HCT116 (cell line): ENCODE measurements at regions of chr12 and their contacts with region 1.

Region 1: GRCh38 chr12:91355150-91356006 is 172.8 kb upstream of the DCN start:
- DNase-seq: peak; percentile 69
- ATAC-seq: peak; percentile 99
- H3K4me3 ChIP-seq: no peak overlapping the region
- H3K27ac ChIP-seq: no peak overlapping the region
- H3K4me1 ChIP-seq: no peaks in the 10 kb centered on the region
- H3K27me3 ChIP-seq: no peaks in the 10 kb centered on the region
- CTCF ChIP-seq: peak; percentile 83 to 91 (median 84)
- POLR2A ChIP-seq: no peak
- RAD21 ChIP-seq: peak; percentile 88

Region 2: DNA sequence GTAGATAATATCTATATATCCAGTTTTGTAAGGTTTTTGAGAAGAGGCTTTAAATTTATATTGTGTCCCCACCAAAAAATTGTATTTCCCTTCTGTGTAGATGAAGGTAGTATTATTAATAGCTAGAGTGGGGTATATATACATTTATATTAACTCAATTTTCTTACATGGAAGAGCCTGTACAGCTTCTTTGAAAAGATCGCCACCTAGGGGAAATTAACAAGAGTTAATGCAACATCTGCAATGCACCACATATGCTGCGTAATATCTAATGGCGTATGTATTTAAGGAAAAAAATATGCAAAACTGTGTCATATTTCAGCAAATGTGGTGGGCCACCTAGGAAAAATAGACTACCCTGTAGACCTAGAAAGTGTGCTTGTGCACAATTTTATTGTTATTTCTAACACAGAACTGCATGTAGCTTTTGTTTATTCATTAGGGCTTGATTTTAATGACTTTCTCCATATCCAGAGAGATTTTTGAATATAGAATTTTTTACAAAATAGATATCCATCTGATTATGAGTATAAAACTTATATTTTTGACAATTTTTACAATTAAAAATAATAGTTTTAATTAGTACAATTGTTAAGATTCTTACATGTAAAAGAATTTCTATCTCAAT is 414.4 kb before region 1 on chr12:
- CTCF ChIA-PET with region 1: interaction called, 23 read pairs
- POLR2A ChIA-PET with region 1: no interaction called
- RAD21 ChIA-PET with region 1: interaction called, 3 to 6 read pairs
- intact Hi-C with region 1: no loop called
- DNase-seq: peak; percentile 55
- ATAC-seq: peak; percentile 94
- H3K4me3 ChIP-seq: no peak overlapping the region
- H3K27ac ChIP-seq: no peak overlapping the region
- H3K4me1 ChIP-seq: peaks cover 0 to 12% of the 10 kb centered on the region in 2 experiments; a peak in 3 of 4 replicates
- H3K27me3 ChIP-seq: no peaks in the 10 kb centered on the region
- CTCF ChIP-seq: peak; percentile 42 to 72 (median 63); a peak in 5 of 6 replicates
- POLR2A ChIP-seq: no peak
- RAD21 ChIP-seq: peak; percentile 78

Region 3: GRCh38 chr12:90959538-90960139 is 395.7 kb before region 1 on chr12:
- CTCF ChIA-PET with region 1: interaction called, 11 read pairs
- POLR2A ChIA-PET with region 1: no interaction called
- RAD21 ChIA-PET with region 1: no interaction called
- intact Hi-C with region 1: loop called (anchors 1 kb)
- DNase-seq: peak; percentile 39
- ATAC-seq: peak; percentile 82
- H3K4me3 ChIP-seq: no peak overlapping the region
- H3K27ac ChIP-seq: no peak overlapping the region
- H3K4me1 ChIP-seq: no peaks in the 10 kb centered on the region
- H3K27me3 ChIP-seq: no peaks in the 10 kb centered on the region
- CTCF ChIP-seq: peak; percentile 55 to 68 (median 66); a peak in 5 of 6 replicates
- POLR2A ChIP-seq: no peak
- RAD21 ChIP-seq: peak; percentile 64

Region 4: GRCh38 chr12:90978117-90978770 is 377.1 kb before region 1 on chr12:
- CTCF ChIA-PET with region 1: interaction called, 12 read pairs
- POLR2A ChIA-PET with region 1: no interaction called
- RAD21 ChIA-PET with region 1: no interaction called
- intact Hi-C with region 1: loop called (anchors 1 kb)
- DNase-seq: peak; percentile 43
- ATAC-seq: peak; percentile 92
- H3K4me3 ChIP-seq: no peak overlapping the region
- H3K27ac ChIP-seq: no peak overlapping the region
- H3K4me1 ChIP-seq: peaks cover 0 to 9% of the 10 kb centered on the region in 2 experiments; a peak in 1 of 4 replicates
- H3K27me3 ChIP-seq: no peaks in the 10 kb centered on the region
- CTCF ChIP-seq: peak; percentile 55 to 82 (median 75)
- POLR2A ChIP-seq: no peak
- RAD21 ChIP-seq: peak; percentile 86

Region 5: DNA sequence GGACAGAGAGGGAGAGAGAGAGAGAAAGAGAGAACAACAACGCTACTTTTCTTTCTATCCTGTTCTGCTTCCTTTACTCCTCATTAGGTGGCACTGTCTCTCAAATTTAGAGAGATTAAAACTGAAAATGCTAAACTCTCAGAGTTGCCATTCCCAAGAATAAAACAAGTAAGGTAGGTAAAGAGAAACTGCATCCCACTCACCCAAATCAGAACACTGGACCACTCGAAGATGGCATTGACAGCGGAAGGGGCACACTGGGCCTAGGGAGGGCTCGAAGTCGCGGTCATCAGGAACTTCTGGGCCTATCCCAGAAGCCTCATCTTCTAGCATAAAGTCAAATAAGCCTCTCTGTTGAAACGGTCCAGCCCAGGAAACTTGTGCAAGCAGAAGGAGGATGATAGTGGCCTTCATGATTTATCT is 177.2 kb before region 1 on chr12:
- CTCF ChIA-PET with region 1: interaction called, 5 read pairs
- POLR2A ChIA-PET with region 1: no interaction called
- RAD21 ChIA-PET with region 1: no interaction called
- intact Hi-C with region 1: loop called (anchors 1 kb)
- DNase-seq: no peak
- ATAC-seq: peak; percentile 60
- H3K4me3 ChIP-seq: no peak overlapping the region
- H3K27ac ChIP-seq: no peak overlapping the region
- H3K4me1 ChIP-seq: no peaks in the 10 kb centered on the region
- H3K27me3 ChIP-seq: no peaks in the 10 kb centered on the region
- CTCF ChIP-seq: peak; percentile 30 to 36 (median 32); a peak in 3 of 6 replicates
- POLR2A ChIP-seq: no peak
- RAD21 ChIP-seq: peak; percentile 53

Region 6: GRCh38 chr12:91333966-91334365 is 21.4 kb before region 1 on chr12:
- CTCF ChIA-PET with region 1: no interaction called
- POLR2A ChIA-PET with region 1: no interaction called
- RAD21 ChIA-PET with region 1: no interaction called
- intact Hi-C with region 1: loop called (anchors 1 kb)
- DNase-seq: no peak
- ATAC-seq: no peak
- H3K4me3 ChIP-seq: no peak overlapping the region
- H3K27ac ChIP-seq: no peak overlapping the region
- H3K4me1 ChIP-seq: no peaks in the 10 kb centered on the region
- H3K27me3 ChIP-seq: no peaks in the 10 kb centered on the region
- CTCF ChIP-seq: no peak
- POLR2A ChIP-seq: no peak
- RAD21 ChIP-seq: no peak